Transverse colon (tissue), 4 donors: ENCODE measurements at regions of chr10 and their contacts with region 1.

Region 1: GRCh38 chr10:31908157-31908556 is 20.5 kb downstream of the ARHGAP12 start:
- DNase-seq: no peak
- H3K4me3 ChIP-seq: no peak overlapping the region
- H3K27ac ChIP-seq: no peak overlapping the region
- H3K4me1 ChIP-seq: peaks cover 3 to 10% (median 7%) of the 10 kb centered on the region in 4 donors
- H3K27me3 ChIP-seq: no peaks in the 10 kb centered on the region
- CTCF ChIP-seq: no peak
- EP300 ChIP-seq: no peak
- POLR2A ChIP-seq: no peak

Region 2: DNA sequence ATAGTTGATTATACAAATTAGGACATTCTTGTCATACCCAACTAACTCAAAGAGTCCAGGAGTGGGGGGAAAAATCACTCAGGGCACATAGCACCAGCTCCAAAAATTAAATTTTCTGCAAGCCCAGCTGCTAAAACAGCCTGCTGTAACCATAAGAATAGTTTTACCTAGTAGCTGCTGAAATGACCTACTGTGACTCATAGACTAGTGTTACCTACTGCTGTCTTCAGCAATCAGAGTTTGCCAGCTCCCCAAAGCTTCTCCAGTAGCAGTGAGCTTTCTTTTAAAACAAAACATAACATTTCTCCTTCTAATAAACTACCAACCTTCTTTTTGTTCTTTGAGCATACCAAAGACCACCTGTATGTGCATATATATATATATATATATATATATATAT is 24.7 kb after region 1 on chr10:
- in situ Hi-C with region 1: no loop called
- intact Hi-C with region 1: loop called (anchors 1 kb)
- DNase-seq: no peak
- H3K4me3 ChIP-seq: no peak overlapping the region
- H3K27ac ChIP-seq: no peak overlapping the region
- H3K4me1 ChIP-seq: peaks cover 5 to 26% (median 15%) of the 10 kb centered on the region in 4 donors
- H3K27me3 ChIP-seq: no peaks in the 10 kb centered on the region
- CTCF ChIP-seq: no peak
- EP300 ChIP-seq: no peak
- POLR2A ChIP-seq: no peak